CD4-positive, alpha-beta T cell (primary cell): ENCODE measurements at regions of chr6 and their contacts with region 1.

Region 1: DNA sequence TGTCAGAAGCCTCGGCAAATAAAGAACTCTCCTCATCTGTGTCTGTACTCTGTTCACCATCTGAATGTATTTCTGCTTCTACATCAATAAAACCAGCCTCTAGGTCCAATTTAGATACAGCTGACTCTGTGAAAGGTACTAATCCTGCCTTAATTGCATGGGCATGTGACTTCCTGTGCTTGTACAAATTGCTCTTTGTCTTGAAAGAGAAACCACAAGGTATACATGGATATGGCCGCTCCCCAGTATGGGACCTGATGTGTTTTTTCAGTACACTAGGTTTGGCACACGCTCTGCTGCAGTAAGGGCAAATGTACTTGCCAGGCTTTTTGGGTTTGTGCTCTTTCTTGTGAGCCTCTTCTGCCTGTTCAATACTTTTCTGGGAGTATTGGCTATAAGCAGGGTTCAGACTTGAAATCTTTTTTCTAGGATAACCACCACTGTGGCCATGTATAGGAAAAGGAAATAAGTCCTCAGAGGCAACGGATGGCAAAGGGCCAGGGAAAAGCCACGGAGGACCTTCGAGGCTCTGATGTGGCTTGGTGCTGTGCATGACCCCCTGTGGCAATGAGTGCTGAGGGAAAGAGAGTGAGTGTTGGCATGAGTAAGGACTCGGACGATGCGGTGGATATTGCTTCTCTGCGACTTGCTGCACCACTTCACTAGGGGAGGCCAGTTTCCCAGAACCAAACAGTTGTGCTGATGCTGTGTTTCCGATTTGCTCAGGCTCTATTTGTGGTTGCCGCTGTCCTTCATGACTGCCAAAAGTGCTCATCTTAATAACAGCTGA is 170.9 kb downstream of the HIVEP2 start:
- DNase-seq: peak in 4 of 14 experiments; percentile 22 to 74 (median 60)
- ATAC-seq: peak; percentile 85
- H3K4me3 ChIP-seq: peak overlapping the region; percentile 5
- H3K4me3 Mint-ChIP-seq: peak overlapping the region; percentile 63
- H3K27ac ChIP-seq: peak overlapping the region; percentile 1 to 46
- H3K27ac Mint-ChIP-seq: peak overlapping the region; percentile 84
- H3K4me1 ChIP-seq: peaks cover 27% of the 10 kb centered on the region
- H3K4me1 Mint-ChIP-seq: peaks cover 44% of the 10 kb centered on the region
- H3K27me3 ChIP-seq: no peaks in the 10 kb centered on the region
- H3K27me3 Mint-ChIP-seq: no peaks in the 10 kb centered on the region
- CTCF ChIP-seq: no peak

Region 2: DNA sequence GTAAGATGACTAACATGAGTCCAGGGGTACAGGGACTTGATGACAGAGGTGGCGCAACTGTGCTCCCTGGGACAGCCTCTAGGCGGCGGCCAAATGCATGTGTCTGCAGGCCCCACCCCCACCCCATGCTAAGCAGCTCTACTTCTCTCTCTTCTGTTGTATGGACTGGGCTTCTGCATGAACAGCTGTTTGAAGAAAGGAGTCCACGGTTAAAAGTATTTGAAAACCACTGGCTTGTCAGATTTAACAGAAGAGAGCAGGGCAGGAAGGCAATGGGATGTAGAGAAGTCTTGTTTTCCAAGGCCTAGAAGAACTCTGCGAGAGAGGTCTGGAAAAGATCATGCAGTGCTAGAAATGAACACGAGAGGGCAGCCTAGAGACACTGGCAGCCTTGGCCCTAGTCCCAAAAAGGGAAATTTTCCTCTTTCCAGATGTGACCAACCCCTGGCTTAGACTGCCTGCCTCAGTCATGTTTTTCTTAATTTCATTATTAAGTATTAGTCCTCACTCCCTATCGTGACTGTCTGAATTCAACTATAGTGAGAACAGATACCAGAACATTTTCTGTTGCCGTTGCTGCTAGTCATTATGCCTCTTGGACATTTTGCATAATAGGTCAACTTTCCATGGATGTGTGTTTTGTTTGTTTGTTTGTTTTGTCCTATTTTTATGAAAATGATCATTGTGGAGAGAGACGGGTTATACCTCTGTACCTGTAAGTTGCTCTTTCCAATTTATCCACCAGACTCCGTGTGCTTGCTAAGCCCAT is 207.2 kb before region 1 on chr6:
- CTCF ChIA-PET with region 1: no interaction called
- POLR2A ChIA-PET with region 1: no interaction called
- intact Hi-C with region 1: no loop called
- DNase-seq: peak; percentile 14 to 76 (median 47)
- ATAC-seq: peak; percentile 62
- H3K4me3 ChIP-seq: no peak overlapping the region
- H3K4me3 Mint-ChIP-seq: peak overlapping the region; percentile 57
- H3K27ac ChIP-seq: no peak overlapping the region
- H3K27ac Mint-ChIP-seq: peak overlapping the region; percentile 79
- H3K4me1 ChIP-seq: peaks cover 35% of the 10 kb centered on the region
- H3K4me1 Mint-ChIP-seq: peaks cover 77% of the 10 kb centered on the region
- H3K27me3 ChIP-seq: no peaks in the 10 kb centered on the region
- H3K27me3 Mint-ChIP-seq: no peaks in the 10 kb centered on the region
- CTCF ChIP-seq: peak; percentile 82

Region 3: GRCh38 chr6:142819603-142820337 is 45.7 kb after region 1 on chr6:
- CTCF ChIA-PET with region 1: interaction called, 3 read pairs
- POLR2A ChIA-PET with region 1: interaction called, 4 read pairs
- intact Hi-C with region 1: loop called in 1 of 2 experiments (anchors 5 kb)
- DNase-seq: peak in 5 of 14 experiments; percentile 13 to 84 (median 75)
- ATAC-seq: peak; percentile 51
- H3K4me3 ChIP-seq: peak overlapping the region; percentile 45
- H3K4me3 Mint-ChIP-seq: peak overlapping the region; percentile 84
- H3K27ac ChIP-seq: peak overlapping the region; percentile 75 to 84
- H3K27ac Mint-ChIP-seq: peak overlapping the region; percentile 82
- H3K4me1 ChIP-seq: peaks cover 52% of the 10 kb centered on the region
- H3K4me1 Mint-ChIP-seq: peaks cover 82% of the 10 kb centered on the region
- H3K27me3 ChIP-seq: no peaks in the 10 kb centered on the region
- H3K27me3 Mint-ChIP-seq: no peaks in the 10 kb centered on the region
- CTCF ChIP-seq: no peak